AG04450 (cell line): ENCODE measurements at regions of chr10 and their contacts with region 1.

Region 1: DNA sequence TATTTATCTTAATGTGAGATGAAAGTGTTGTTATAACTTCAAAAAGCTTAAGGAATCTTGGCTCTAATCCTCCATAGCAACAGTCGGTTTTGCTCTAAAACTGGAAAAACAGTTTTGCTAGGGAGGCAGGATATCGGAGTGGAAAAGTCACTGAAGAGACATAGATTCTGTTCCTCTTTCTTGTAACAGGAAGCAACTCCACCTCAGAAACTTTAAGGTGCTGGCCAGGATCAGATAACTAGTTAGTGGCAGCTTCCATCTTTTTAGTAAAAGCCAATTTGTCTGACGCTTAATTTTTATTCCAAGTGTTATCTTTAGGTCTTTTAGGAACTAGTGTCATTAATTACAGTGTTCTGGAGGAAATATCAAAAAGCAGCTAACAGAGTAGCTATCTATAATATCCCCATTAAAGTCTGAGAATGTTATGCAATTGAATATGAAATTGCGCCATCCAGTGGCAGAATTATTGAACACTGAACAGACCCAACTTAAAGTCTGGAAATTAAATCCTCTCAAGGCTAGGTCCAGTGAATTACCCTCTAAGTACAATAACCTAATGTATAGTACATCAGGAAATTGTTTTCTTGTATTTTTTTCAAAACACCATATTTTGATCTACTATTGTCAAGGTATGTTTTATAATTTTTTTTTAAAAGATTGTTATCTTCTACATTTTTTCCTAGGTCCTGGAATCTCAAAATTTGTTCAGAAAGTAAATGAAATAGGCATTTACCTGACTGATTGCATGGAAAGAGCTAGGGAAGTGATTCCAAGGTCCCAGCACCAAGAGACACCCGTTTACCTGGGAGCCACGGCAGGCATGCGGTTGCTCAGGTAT is 65.9 kb upstream of the CC2D2B start:
- DNase-seq: peak; percentile 27
- H3K4me3 ChIP-seq: no peak overlapping the region
- H3K27ac ChIP-seq: no peak overlapping the region
- H3K27me3 ChIP-seq: peaks cover 3% of the 10 kb centered on the region
- CTCF ChIP-seq: peak; percentile 58

Region 2: DNA sequence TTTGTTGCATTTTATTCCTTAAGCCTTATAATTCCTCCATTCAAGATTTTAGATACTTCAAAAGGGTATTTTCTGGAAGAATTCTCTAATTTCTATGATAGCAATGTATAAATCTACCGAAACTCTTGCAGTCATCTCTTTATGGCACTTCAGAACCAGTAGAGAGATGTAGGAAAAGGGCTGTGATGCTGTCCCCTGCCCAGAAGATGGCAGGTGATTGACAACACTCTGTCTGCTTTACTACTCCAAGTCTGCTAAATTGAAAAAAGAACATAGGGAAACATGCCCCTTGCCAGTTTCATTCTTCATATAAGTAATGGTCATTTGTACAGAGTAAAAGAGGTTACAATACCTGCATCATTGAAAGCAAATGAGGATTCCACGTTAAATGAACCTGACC is 153.2 kb before region 1 on chr10:
- CTCF ChIA-PET with region 1: interaction called, 881 read pairs
- POLR2A ChIA-PET with region 1: interaction called, 4 read pairs
- DNase-seq: no peak
- H3K4me3 ChIP-seq: no peak overlapping the region
- H3K27ac ChIP-seq: no peak overlapping the region
- H3K27me3 ChIP-seq: no peaks in the 10 kb centered on the region
- CTCF ChIP-seq: no peak

Region 3: DNA sequence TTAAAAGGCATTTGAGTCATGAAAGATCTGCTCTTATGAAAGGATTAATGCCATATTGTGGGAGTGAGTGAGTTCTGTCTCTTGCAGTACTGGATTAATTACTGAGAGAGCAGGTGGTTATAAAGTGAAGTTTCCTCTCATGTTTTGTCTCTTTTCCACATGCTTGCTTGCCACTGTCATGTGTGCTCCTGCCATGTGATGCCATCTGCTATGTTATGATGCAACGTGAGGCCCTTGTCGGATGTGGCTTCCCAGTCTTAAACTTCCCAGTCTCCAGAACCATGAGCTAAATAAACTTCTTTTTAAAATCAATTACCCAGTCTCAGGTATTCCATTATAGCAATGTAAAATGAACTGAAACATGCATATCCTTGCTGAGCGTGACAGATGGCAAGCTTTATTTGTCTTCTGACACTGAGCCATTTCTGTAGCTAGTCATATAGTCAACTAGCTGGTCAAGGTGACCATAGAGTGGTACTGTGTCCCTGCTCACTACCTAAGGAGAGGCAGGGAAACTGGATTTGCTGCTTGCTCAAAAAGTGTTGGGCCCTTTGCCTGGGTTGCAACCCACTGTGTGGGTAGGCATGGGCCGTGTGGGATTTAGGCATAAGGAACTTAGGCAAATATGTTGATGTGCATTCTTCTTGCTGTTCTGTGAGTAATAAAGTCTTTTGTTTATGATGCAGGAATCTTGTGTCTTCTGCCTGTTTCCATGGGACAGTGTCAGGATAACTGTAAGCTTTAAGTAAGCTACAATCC is 125.2 kb before region 1 on chr10:
- CTCF ChIA-PET with region 1: interaction called, 12 read pairs
- POLR2A ChIA-PET with region 1: no interaction called
- DNase-seq: no peak
- H3K4me3 ChIP-seq: no peak overlapping the region
- H3K27ac ChIP-seq: no peak overlapping the region
- H3K27me3 ChIP-seq: no peaks in the 10 kb centered on the region
- CTCF ChIP-seq: no peak

Region 4: DNA sequence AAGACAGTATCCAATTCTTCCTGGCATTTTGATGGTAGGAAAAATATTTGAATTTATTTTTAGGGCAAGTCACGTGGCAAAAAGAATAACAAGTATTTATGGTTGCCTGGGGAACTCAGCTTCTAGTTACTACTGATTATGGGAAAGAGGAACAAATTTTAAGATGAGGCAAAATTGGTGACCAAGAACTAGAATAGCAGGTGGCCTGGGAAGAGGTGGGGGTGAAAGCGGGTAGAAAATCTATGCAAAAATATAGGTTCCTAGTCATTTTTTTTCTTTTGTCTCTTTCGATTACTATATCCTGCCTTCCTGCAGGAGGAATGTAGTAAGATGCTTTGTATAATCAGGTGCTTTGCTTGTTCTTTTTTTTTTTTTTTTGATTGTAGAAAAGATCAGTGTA is 58.1 kb before region 1 on chr10:
- CTCF ChIA-PET with region 1: interaction called, 11 read pairs
- POLR2A ChIA-PET with region 1: no interaction called
- DNase-seq: no peak
- H3K4me3 ChIP-seq: no peak overlapping the region
- H3K27ac ChIP-seq: no peak overlapping the region
- H3K27me3 ChIP-seq: no peaks in the 10 kb centered on the region
- CTCF ChIP-seq: no peak

Region 5: DNA sequence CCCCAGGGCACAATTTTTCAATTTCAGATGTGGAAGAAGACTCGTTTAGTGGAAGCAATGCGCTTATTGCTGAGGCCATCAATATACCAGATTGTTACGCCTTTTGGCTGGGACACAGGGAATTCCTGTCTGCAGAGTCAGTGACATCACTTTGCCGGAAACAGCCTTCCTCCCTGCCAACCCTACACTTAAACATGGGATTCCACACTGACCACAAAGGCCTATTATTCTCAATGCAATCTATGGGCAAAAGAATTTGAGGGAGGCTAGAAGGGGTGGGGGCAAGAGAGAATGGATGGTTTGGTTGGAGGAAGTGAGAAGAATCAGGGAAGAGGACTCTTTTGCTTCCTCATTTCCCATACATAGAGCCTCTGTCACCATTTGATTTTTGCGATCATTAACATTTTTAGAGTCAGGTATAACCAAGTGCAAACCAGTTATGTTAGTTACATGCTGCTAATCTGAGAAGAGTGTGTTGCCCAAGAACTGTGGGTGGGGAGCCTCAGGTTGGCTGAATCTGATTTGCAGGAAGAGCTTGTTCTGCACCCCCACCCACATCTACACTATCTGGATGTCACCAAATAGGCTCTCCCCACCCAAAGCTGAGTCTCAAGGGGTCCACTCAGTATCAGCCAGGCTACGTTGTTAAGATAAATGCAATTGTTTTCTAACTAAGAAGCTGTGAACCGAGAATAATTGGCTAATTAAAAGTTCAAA is 27.7 kb before region 1 on chr10:
- CTCF ChIA-PET with region 1: interaction called, 28 read pairs
- POLR2A ChIA-PET with region 1: no interaction called
- DNase-seq: peak; percentile 59
- H3K4me3 ChIP-seq: no peak overlapping the region
- H3K27ac ChIP-seq: no peak overlapping the region
- H3K27me3 ChIP-seq: no peaks in the 10 kb centered on the region
- CTCF ChIP-seq: no peak

Region 6: DNA sequence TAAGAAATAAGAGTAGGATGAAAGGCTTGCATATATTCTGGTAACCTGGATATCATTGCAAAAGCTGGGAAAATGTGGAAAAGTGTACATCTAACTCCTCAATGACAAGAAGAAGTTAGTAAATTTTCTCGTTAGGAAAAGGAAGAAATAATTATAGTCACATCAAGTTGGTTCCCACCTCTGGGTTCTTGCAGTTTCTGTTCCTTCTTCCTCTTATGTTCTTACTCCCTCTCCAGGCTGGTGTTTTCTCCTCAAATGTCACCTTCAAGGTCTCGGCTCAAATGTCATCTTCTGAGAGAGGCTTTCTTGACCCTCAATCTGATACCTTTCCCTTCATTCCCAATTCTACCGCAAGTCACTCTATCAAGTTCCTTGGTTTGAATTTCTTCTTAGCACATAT is 21.5 kb before region 1 on chr10:
- CTCF ChIA-PET with region 1: interaction called, 28 read pairs
- POLR2A ChIA-PET with region 1: no interaction called
- DNase-seq: no peak
- H3K4me3 ChIP-seq: no peak overlapping the region
- H3K27ac ChIP-seq: no peak overlapping the region
- H3K27me3 ChIP-seq: no peaks in the 10 kb centered on the region
- CTCF ChIP-seq: no peak

Region 7: DNA sequence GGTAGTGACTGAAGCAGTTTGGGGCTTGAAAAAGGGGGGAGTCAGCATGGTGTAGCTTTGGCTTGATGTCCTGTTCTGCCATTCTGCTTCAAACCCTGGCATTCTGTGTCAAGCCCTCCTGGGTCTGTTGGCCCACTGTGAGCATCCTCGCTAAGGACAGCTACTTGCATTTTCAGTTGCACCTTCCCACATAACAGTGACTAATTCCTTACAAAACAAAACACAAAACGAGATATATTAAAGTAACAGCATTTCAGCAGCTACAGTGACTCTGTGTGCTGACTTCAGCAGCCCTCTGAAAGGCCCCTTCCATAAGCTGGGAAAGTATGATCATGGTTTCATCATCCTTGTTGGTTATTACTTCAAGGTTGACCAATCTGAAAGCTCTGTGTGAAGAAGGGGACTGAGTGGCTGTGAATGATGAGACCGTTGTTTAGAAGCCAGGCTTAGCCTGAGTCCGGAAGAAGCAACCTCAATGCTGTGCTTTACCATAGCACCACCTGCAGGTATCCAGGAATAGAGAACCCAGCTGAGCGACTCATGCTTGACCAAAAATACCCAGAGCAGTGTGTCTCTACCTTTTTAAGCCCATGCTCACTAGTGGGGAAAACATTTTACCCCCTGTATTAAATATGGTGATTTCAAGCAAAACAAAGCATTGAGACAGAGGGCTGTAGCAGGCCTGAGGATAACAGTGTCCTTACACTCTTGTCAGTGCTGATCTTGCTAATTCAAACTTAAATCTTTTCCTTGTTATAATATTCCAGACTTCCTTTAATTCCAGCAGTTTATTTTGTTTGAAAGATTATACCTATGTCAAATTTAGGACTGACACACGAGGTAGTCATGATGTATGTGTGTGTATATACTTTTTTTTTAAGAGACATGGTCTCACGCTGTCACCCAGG is 23.3 kb after region 1 on chr10:
- CTCF ChIA-PET with region 1: interaction called, 85 read pairs
- POLR2A ChIA-PET with region 1: no interaction called
- DNase-seq: peak; percentile 63
- H3K4me3 ChIP-seq: no peak overlapping the region
- H3K27ac ChIP-seq: peak overlapping the region; percentile 0
- H3K27me3 ChIP-seq: no peaks in the 10 kb centered on the region
- CTCF ChIP-seq: peak; percentile 87

Region 8: GRCh38 chr10:96025566-96025965 is 183.7 kb after region 1 on chr10:
- CTCF ChIA-PET with region 1: no interaction called
- POLR2A ChIA-PET with region 1: no interaction called
- DNase-seq: no peak
- H3K4me3 ChIP-seq: no peak overlapping the region
- H3K27ac ChIP-seq: no peak overlapping the region
- H3K27me3 ChIP-seq: no peaks in the 10 kb centered on the region
- CTCF ChIP-seq: peak; percentile 25; the same call in 1 of the 2 replicates